AG04449 (cell line): ENCODE measurements at regions of chr4 and their contacts with region 1.

Region 1: GRCh38 chr4:103091601-103092223 is 7.9 kb downstream of the BDH2 start:
- DNase-seq: no peak
- H3K4me3 ChIP-seq: no peak overlapping the region
- CTCF ChIP-seq: peak; percentile 41

Region 2: DNA sequence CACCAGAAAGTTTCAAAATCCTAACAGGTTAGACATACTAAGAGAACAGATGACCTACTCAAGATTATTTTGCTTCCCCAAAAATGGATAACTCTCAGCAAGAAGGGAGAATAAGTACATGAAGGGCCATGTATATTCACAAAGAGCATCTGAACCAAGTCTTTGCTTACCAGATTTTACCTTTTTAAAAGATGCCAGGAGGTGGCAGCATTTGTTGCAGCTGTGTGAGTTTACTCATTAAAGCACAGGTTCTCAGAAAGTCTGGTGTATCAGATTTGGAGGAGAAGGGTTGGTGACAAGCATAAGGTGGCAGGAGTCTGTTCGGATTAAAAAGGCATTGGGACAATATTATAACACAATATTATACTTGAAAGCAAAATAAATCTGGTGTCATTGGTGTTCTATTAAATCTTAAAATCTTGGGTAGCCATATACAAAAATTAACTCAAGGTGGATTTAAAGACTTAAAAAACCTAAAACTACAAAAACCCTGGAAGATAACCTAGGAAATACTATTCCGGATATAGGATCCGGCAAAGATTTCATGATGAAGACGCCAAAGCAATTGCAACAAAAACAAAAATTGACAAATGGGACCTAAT is 641.9 kb before region 1 on chr4:
- CTCF ChIA-PET with region 1: interaction called, 17 read pairs
- POLR2A ChIA-PET with region 1: no interaction called
- DNase-seq: no peak
- H3K4me3 ChIP-seq: no peak overlapping the region
- CTCF ChIP-seq: peak; percentile 50

Region 3: GRCh38 chr4:102586644-102587021 is 505.1 kb before region 1 on chr4:
- CTCF ChIA-PET with region 1: no interaction called
- POLR2A ChIA-PET with region 1: no interaction called
- DNase-seq: no peak
- H3K4me3 ChIP-seq: no peak overlapping the region
- CTCF ChIP-seq: no peak

Region 4: GRCh38 chr4:103008875-103009729 is 82.6 kb before region 1 on chr4:
- CTCF ChIA-PET with region 1: interaction called, 12 read pairs
- POLR2A ChIA-PET with region 1: no interaction called
- DNase-seq: no peak
- H3K4me3 ChIP-seq: no peak overlapping the region
- CTCF ChIP-seq: peak; percentile 62

Region 5: GRCh38 chr4:103046416-103047290 is 45.1 kb before region 1 on chr4:
- CTCF ChIA-PET with region 1: interaction called, 15 read pairs
- POLR2A ChIA-PET with region 1: no interaction called
- DNase-seq: no peak
- H3K4me3 ChIP-seq: no peak overlapping the region
- CTCF ChIP-seq: peak; percentile 70

Region 6: GRCh38 chr4:103075901-103076739 is 15.6 kb before region 1 on chr4:
- CTCF ChIA-PET with region 1: interaction called, 82 read pairs
- POLR2A ChIA-PET with region 1: no interaction called
- DNase-seq: no peak
- H3K4me3 ChIP-seq: peak overlapping the region; percentile 72
- CTCF ChIP-seq: no peak